IMR-90 (cell line): ENCODE measurements at regions of chr2 and their contacts with region 1.

Region 1: DNA sequence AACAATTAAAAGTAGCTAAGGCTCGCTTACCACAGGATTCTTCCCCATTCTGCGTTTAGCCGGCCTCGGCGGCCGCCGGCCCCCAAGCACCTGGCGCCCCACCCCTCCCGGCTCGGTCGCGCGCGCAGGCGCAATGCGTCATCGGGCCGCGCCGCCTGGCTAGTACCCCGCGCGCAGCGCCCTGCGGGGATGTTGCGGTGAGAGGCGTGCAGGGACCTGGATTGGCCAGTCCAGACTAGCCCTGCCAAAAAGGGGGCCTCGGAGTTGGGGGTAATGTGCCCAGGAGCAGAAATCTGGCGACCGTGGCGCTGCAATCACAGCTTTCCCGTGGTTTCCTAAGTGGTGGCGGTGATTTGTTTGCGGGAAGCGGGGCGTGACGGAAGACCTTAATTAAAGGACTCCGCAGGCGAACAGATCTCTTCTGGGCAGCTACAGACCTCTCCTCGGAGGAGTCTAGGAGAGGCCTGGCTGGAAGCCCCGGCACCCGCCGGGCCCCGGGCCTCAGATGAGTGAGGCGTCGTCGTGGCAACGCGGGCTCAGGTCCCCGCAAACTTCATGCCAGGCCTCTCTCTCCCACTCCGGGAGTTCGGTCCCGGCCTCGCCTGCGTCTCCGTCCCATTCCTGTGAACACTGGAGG is 606 bp downstream of the TMEM237 start:
- DNase-seq: peak; percentile 75
- ATAC-seq: peak; percentile 91
- H3K4me3 ChIP-seq: peak overlapping the region; percentile 91
- H3K27ac ChIP-seq: peak overlapping the region; percentile 85
- H3K4me1 ChIP-seq: peaks cover 4% of the 10 kb centered on the region
- H3K27me3 ChIP-seq: no peaks in the 10 kb centered on the region
- CTCF ChIP-seq: 0 out of 2 replicates have a peak, but pooled peaks have one; percentile 1
- POLR2A ChIP-seq: peak; percentile 73; the same call in 1 of the 2 replicates
- RAD21 ChIP-seq: no peak

Region 2: DNA sequence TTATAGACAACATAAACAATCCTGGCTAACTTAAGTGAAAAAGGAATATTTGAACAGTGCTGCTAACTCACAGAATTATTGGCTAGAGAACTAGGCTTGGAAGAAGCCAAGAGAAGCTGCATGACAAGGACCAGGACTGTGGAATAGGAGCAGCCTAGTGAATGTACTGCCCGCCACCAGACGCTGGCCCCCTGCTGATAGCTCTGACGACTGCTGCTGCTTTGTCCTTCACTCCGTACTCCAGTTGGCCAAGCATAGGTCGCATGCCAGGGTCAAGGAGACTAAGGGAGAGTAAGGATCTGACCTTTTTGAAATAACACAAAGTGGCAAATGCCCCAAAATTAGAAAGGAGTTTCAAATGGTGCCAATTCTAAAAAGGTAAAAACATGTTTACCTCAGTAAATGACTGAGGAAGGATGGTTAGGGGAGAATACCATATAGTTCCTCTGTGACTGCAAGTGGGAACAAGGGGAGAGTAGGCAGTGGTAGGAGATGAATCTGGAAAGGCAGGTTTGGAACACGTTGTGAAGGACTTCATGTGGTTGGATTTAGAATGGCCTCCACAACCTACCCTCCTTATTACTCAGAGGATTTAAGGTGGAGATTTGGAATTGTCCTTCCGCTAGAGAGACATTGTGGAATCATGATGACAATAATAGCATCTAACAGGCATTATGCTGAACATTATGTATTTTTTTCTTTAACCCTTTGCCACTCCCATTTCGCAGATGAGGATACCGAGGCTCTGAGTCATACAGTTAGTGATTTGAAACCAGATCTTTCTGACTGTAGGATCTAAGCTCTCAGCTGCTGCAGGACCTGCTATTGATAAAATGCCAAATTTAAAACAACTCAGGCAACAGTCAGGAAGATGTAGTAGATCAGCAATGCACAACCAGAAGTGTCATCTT is 171.6 kb before region 1 on chr2:
- CTCF ChIA-PET with region 1: no interaction called
- POLR2A ChIA-PET with region 1: no interaction called
- dilution Hi-C with region 1: no loop called
- in situ Hi-C with region 1: no loop called
- intact Hi-C with region 1: loop called (anchors 5 kb)
- DNase-seq: peak; percentile 69
- ATAC-seq: peak; percentile 58
- H3K4me3 ChIP-seq: no peak overlapping the region
- H3K27ac ChIP-seq: no peak overlapping the region
- H3K4me1 ChIP-seq: peaks cover 13% of the 10 kb centered on the region
- H3K27me3 ChIP-seq: no peaks in the 10 kb centered on the region
- CTCF ChIP-seq: no peak
- POLR2A ChIP-seq: no peak
- RAD21 ChIP-seq: no peak

Region 3: DNA sequence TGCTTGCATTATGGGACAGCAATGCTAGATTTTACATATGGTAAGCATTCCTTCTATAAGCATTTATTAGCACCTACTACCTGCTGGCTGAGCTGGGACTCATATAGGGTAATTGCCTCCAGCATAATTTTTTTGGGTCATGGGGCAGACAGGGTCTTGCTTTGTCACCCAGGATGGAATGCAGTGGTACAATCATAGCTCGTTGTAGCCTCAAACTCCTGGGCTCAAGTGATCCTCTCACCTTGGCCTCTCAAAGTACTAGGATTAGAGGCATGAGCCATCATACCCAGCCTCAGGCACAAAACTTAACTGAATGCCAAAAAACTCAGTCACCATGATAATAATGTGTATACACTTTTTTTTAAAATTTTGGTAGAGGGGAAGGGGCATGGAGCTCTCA is 34.7 kb before region 1 on chr2:
- CTCF ChIA-PET with region 1: no interaction called
- POLR2A ChIA-PET with region 1: no interaction called
- dilution Hi-C with region 1: no loop called
- in situ Hi-C with region 1: no loop called
- intact Hi-C with region 1: no loop called
- DNase-seq: no peak
- ATAC-seq: no peak
- H3K4me3 ChIP-seq: no peak overlapping the region
- H3K27ac ChIP-seq: no peak overlapping the region
- H3K4me1 ChIP-seq: no peaks in the 10 kb centered on the region
- H3K27me3 ChIP-seq: no peaks in the 10 kb centered on the region
- CTCF ChIP-seq: no peak
- POLR2A ChIP-seq: no peak
- RAD21 ChIP-seq: no peak

Region 4: DNA sequence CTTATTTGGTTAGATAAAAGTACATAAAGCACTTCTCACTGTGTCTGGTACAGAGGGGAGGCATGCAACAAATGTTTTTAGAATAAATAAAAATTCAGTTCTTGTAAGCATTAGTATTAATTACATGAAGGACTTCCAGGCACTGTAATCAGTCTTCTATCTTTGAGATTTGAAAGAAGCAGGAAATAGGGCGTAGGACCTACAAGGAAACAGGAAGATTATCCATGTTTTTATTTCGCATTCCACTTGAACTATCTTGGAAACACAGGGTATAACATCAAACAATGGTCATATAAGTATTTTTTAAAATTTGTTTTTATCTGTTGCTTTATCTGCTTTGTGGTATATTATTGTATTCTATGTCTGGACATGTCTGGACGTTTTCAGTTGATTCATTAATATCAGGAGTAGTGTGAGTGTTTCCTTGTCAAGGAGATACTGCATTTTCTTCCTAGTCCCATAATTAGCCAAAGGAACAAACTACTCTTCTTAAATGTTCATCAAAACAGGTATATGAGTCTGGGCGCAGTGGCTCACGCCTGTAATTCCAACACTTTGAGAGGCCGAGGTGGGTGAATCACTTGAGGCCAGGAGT is 765.9 kb after region 1 on chr2:
- CTCF ChIA-PET with region 1: no interaction called
- POLR2A ChIA-PET with region 1: no interaction called
- dilution Hi-C with region 1: no loop called
- in situ Hi-C with region 1: no loop called
- intact Hi-C with region 1: no loop called
- DNase-seq: no peak
- ATAC-seq: peak; percentile 51
- H3K4me3 ChIP-seq: no peak overlapping the region
- H3K27ac ChIP-seq: no peak overlapping the region
- H3K4me1 ChIP-seq: 0 out of 2 replicates have a peak, but pooled peaks cover 2% of the 10 kb centered on the region
- H3K27me3 ChIP-seq: no peaks in the 10 kb centered on the region
- CTCF ChIP-seq: no peak
- POLR2A ChIP-seq: no peak
- RAD21 ChIP-seq: no peak